ENCODE measurements at regions of chr4 and their contacts with region 1.

Region 1: GRCh38 chr4:131584587-131584986 is 1564.5 kb upstream of the PCDH10 start:
- DNase-seq: no peak
- H3K4me3 ChIP-seq: no peak overlapping the region
- H3K27ac ChIP-seq: no peak overlapping the region
- H3K4me1 ChIP-seq: no peaks in the 10 kb centered on the region
- H3K27me3 ChIP-seq: no peaks in the 10 kb centered on the region
- CTCF ChIP-seq: no peak
- POLR2A ChIP-seq: no peak

Region 2: DNA sequence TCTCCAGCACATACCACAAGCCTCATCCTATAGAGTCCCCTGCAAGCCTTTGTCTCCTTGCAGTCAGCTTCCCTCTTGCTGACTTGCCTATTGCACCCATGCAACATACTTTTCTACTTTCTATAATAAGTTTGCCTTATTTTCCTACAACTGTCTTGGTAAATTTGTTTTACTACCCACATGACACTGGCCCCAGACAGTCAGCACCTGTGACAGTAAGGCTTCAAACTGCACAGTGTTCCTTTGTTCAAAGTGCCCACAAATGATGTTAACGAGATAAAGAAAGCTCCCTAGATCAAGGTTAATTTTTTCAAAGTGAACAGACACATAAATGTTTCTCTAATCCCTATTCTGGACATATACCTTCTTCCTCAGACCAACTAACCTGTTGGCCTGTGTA is 1035.4 kb after region 1 on chr4:
- intact Hi-C with region 1: loop called (anchors 5 kb)
- DNase-seq: no peak
- H3K4me3 ChIP-seq: no peak overlapping the region
- H3K27ac ChIP-seq: no peak overlapping the region
- H3K4me1 ChIP-seq: no peaks in the 10 kb centered on the region
- H3K27me3 ChIP-seq: no peaks in the 10 kb centered on the region
- CTCF ChIP-seq: no peak
- POLR2A ChIP-seq: no peak